Natural killer cell (primary cell): ENCODE measurements at regions of chr10 and their contacts with region 1.

Region 1: DNA sequence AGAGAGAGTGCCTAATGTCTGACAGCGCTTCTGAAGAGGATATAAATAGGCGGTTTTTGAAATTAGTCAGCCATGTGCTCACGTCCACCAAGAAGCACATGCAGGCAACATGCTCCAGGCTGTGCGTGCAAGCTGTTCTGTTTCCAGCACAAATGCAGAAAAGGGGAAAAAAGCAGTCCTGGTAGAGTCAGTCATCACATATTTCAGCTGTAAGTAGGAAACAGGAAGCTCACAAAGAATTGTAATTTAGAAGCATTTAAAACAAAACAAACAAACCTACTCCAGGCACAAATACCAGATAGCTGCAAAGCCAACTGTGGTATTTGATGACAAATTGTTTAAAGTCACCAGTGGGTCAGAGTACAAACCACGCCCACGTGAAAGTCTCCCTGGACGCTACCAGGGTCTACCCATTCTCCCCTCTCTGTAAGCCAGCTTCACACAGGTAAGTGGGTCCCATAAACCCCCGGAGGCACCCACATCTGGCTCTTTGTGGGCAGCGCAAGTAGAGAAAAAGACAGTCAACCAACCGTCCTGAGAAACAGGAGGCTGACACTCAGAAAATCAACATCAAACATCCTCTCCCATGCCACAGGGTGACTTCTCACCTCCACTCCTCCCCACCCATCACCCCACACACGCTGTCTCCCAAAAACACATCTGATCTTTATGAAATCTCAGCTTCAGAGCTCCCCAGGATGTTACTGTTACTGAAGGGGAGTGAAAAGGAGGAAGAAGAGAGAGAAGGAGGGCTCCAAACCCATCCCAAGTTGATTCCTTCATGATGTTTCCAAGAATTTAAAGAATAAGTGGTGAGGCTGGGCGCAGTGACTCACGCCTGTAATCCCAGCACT is 186.4 kb downstream of the FAM107B start:
- DNase-seq: peak in 1 of 2 donors; percentile 75
- ATAC-seq: peak; percentile 49 to 59 (median 53)
- H3K4me3 ChIP-seq: peak overlapping the region; percentile 15
- H3K4me3 Mint-ChIP-seq: peak overlapping the region; percentile 90
- H3K27ac ChIP-seq: peak overlapping the region; percentile 89
- H3K27ac Mint-ChIP-seq: peak overlapping the region; percentile 90 to 98
- H3K4me1 ChIP-seq: peaks cover 61% of the 10 kb centered on the region
- H3K4me1 Mint-ChIP-seq: peaks cover 65 to 69% of the 10 kb centered on the region in 2 donors
- H3K27me3 ChIP-seq: no peaks in the 10 kb centered on the region
- H3K27me3 Mint-ChIP-seq: no peaks in the 10 kb centered on the region
- CTCF ChIP-seq: no peak

Region 2: GRCh38 chr10:14571866-14572507 is 16.3 kb before region 1 on chr10:
- intact Hi-C with region 1: loop called (anchors 2 kb)
- DNase-seq: peak; percentile 54 to 88
- ATAC-seq: peak; percentile 57 to 69 (median 63)
- H3K4me3 ChIP-seq: peak overlapping the region; percentile 24
- H3K4me3 Mint-ChIP-seq: peak overlapping the region; percentile 88
- H3K27ac ChIP-seq: peak overlapping the region; percentile 84
- H3K27ac Mint-ChIP-seq: peak overlapping the region; percentile 95 to 98
- H3K4me1 ChIP-seq: peaks cover 48% of the 10 kb centered on the region
- H3K4me1 Mint-ChIP-seq: peaks cover 61 to 63% of the 10 kb centered on the region in 2 donors
- H3K27me3 ChIP-seq: no peaks in the 10 kb centered on the region
- H3K27me3 Mint-ChIP-seq: no peaks in the 10 kb centered on the region
- CTCF ChIP-seq: no peak

Region 3: GRCh38 chr10:14604181-14605142 is 16.2 kb after region 1 on chr10:
- intact Hi-C with region 1: loop called (anchors 2 kb)
- DNase-seq: peak; percentile 72 to 86
- ATAC-seq: peak; percentile 81 to 92 (median 86)
- H3K4me3 ChIP-seq: peak overlapping the region; percentile 48
- H3K4me3 Mint-ChIP-seq: peak overlapping the region; percentile 90
- H3K27ac ChIP-seq: peak overlapping the region; percentile 50
- H3K27ac Mint-ChIP-seq: peak overlapping the region; percentile 57 to 88
- H3K4me1 ChIP-seq: peaks cover 27% of the 10 kb centered on the region
- H3K4me1 Mint-ChIP-seq: peaks cover 55% of the 10 kb centered on the region in 2 donors
- H3K27me3 ChIP-seq: no peaks in the 10 kb centered on the region
- H3K27me3 Mint-ChIP-seq: peaks cover 0 to 3% of the 10 kb centered on the region in 2 donors
- CTCF ChIP-seq: no peak

Region 4: GRCh38 chr10:14648005-14648765 is 59.9 kb after region 1 on chr10:
- intact Hi-C with region 1: loop called (anchors 5 kb)
- DNase-seq: peak; percentile 57 to 90
- ATAC-seq: peak; percentile 85 to 90 (median 87)
- H3K4me3 ChIP-seq: peak overlapping the region; percentile 6
- H3K4me3 Mint-ChIP-seq: peak overlapping the region; percentile 76
- H3K27ac ChIP-seq: peak overlapping the region; percentile 96
- H3K27ac Mint-ChIP-seq: peak overlapping the region; percentile 94 to 96
- H3K4me1 ChIP-seq: peaks cover 29% of the 10 kb centered on the region
- H3K4me1 Mint-ChIP-seq: peaks cover 24 to 27% of the 10 kb centered on the region in 2 donors
- H3K27me3 ChIP-seq: no peaks in the 10 kb centered on the region
- H3K27me3 Mint-ChIP-seq: no peaks in the 10 kb centered on the region
- CTCF ChIP-seq: no peak

Region 5: GRCh38 chr10:14665304-14665703 is 77.0 kb after region 1 on chr10:
- intact Hi-C with region 1: no loop called
- DNase-seq: peak in 1 of 2 donors; percentile 26
- ATAC-seq: peak; percentile 84 to 87 (median 87)
- H3K4me3 ChIP-seq: no peak overlapping the region
- H3K4me3 Mint-ChIP-seq: peak overlapping the region; percentile 29
- H3K27ac ChIP-seq: peak overlapping the region; percentile 14
- H3K27ac Mint-ChIP-seq: peak overlapping the region; percentile 60 to 74
- H3K4me1 ChIP-seq: peaks cover 12% of the 10 kb centered on the region
- H3K4me1 Mint-ChIP-seq: peaks cover 52 to 70% of the 10 kb centered on the region in 2 donors
- H3K27me3 ChIP-seq: no peaks in the 10 kb centered on the region
- H3K27me3 Mint-ChIP-seq: no peaks in the 10 kb centered on the region
- CTCF ChIP-seq: no peak